ENCODE measurements at regions of chr19 and their contacts with region 1.

Region 1: GRCh38 chr19:1360818-1361461 is 22.8 kb upstream of the NDUFS7 start:
- DNase-seq: peak; percentile 97
- H3K4me3 ChIP-seq: peak overlapping the region; percentile 28 to 52
- H3K27ac ChIP-seq: peak overlapping the region; percentile 62 to 92
- H3K4me1 ChIP-seq: peaks cover 25 to 32% of the 10 kb centered on the region in 2 experiments
- H3K27me3 ChIP-seq: no peaks in the 10 kb centered on the region
- CTCF ChIP-seq: no peak
- EP300 ChIP-seq: 0 out of 4 replicates have a peak, but pooled peaks of 1 of the 2 experiments have one; percentile 42
- RAD21 ChIP-seq: peak; percentile 10; the same call in 1 of the 2 replicates

Region 2: GRCh38 chr19:1373534-1374249 is 12.8 kb after region 1 on chr19:
- CTCF ChIA-PET with region 1: interaction called, 14 read pairs
- POLR2A ChIA-PET with region 1: no interaction called
- DNase-seq: no peak
- H3K4me3 ChIP-seq: no peak overlapping the region
- H3K27ac ChIP-seq: no peak overlapping the region
- H3K4me1 ChIP-seq: no peaks in the 10 kb centered on the region
- H3K27me3 ChIP-seq: no peaks in the 10 kb centered on the region
- CTCF ChIP-seq: no peak
- EP300 ChIP-seq: no peak
- RAD21 ChIP-seq: no peak

Region 3: DNA sequence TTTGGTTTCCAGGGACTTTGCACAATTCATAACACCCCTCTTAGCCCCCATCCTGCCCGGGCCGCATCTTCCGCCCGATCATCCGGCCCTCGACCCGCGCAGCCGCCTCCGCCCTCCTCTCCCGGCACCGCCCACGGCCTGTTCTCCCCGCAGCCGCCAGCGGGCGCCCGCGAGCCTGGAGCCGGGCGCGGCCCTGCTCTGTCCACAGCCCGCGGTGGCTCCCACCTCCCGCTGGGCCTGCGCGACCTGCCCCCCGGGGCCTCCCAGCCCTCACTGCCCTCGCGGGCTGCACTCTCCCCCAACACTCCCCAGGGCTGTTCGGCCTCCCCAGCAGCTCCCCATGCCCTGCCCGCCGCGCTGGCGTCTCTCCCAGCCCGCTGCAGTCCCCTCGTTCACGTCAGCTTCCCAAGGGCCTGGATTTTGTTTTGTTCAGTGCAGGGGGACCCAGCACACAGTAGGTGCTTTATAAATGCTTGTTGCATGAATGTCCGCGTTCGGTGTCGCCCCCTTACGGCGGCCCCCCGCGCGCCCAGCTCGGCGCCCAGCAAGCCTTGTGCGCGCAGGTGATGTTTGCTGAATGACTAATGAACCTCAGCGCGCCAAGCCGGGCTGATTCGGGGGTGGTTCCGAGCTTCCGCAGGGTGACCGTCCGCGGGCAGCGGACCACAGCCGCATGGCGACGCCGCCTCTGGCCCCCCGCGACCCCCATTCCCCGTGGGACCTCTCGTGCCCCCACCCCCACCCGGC is 84.4 kb after region 1 on chr19:
- CTCF ChIA-PET with region 1: no interaction called
- POLR2A ChIA-PET with region 1: no interaction called
- DNase-seq: peak; percentile 94
- H3K4me3 ChIP-seq: peak overlapping the region; percentile 64 to 68
- H3K27ac ChIP-seq: peak overlapping the region in 1 of 2 experiments; percentile 60; a peak in 1 of 4 replicates
- H3K4me1 ChIP-seq: peaks cover 3 to 32% of the 10 kb centered on the region in 2 experiments; a peak in 3 of 4 replicates
- H3K27me3 ChIP-seq: no peaks in the 10 kb centered on the region
- CTCF ChIP-seq: peak; percentile 83
- EP300 ChIP-seq: 0 out of 4 replicates have a peak, but pooled peaks of 1 of the 2 experiments have one; percentile 7
- RAD21 ChIP-seq: peak; percentile 56

Measured in SK-N-SH (cell line).